Caki2 (cell line): ENCODE measurements at regions of chr6 and their contacts with region 1.

Region 1: DNA sequence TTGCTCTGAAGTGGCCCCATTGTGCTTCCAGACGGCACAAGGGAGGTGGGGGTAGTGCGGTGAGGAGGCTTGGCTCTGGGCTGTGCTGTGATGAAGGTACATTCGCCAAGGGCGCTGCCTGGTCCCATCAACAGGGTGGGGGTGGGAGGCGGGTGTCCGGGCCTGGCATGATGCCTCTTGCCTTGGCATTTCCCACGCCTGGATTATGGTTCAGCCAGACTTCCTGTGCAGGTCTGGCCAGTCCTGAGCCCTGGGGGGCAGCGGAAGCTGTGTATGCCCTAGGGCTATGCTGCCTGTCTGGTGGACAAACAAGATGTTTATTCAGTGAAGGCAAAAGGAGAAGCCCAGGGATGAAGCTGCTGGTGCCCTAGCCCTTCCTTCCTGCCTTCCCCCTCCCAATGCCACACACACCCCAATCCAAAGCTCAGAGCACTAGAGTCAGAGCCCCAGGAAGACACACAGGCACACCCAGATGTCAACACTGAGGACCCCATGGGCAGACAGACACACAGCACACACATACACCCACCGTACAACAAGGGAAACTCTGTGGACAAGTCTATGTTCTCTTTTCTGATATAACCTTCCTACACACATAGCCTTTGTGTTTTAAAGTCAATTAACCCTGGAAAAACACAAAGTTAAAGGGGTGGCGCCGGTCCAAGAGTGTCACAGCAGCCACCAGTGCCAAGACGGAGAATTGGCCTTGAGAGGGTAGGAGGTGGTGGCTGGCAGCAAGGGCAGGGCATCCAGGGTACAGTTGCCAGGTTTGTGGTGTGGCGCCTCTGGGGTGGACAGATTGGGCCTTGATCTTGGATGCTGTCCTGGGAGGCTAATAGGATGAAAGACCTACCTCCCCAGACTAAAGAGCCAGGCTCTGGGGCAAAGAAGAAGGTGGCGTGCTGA is 54.7 kb upstream of the SAYSD1 start:
- DNase-seq: no peak

Region 2: GRCh38 chr6:38909015-38909730 is 260.5 kb before region 1 on chr6:
- in situ Hi-C with region 1: no loop called
- DNase-seq: no peak

Region 3: GRCh38 chr6:39018107-39018506 is 151.6 kb before region 1 on chr6:
- in situ Hi-C with region 1: no loop called
- DNase-seq: no peak

Region 4: GRCh38 chr6:39263303-39264037 is 93.8 kb after region 1 on chr6:
- in situ Hi-C with region 1: loop called (anchors 10 kb)
- DNase-seq: no peak

Region 5: DNA sequence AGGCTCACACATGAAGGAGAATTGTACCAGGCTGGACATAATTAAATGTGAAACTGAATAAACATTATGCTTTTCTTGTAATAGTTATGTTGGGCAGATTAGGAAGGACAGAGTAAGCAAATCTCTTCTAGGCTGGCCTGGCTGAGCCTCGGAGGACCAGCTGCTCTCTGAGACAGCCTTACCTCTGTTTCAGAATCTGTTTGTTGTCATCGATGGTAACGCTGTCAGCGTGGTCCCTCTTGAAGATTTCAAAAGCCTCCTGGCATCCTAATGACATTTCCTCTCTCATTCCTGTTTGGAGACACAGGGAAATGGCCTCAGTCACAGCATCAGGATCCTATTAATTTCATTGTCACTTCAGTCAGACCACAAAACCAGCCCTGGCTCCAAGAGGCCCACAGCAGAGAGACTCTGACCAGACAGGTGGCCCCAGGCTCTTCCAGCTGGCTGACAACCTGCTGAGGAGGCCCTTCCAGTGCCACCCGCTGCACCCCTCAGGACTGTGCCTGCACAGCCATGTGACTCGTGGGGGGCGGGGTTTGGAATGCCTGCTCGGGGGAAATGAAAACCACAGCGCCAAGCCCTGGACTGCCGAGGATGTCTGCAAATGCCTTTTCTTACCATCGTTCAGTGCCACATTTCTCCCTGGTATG is 261.3 kb after region 1 on chr6:
- in situ Hi-C with region 1: no loop called
- DNase-seq: no peak